ENCODE measurements at regions of chr6 and their contacts with region 1.

Region 1: GRCh38 chr6:111478749-111479148 is 4.3 kb downstream of the REV3L start:
- DNase-seq: peak; percentile 88
- H3K4me3 ChIP-seq: no peak overlapping the region
- H3K27ac ChIP-seq: peak overlapping the region; percentile 29
- H3K4me1 ChIP-seq: peaks cover 45% of the 10 kb centered on the region
- H3K27me3 ChIP-seq: no peaks in the 10 kb centered on the region
- CTCF ChIP-seq: peak; percentile 65

Region 2: DNA sequence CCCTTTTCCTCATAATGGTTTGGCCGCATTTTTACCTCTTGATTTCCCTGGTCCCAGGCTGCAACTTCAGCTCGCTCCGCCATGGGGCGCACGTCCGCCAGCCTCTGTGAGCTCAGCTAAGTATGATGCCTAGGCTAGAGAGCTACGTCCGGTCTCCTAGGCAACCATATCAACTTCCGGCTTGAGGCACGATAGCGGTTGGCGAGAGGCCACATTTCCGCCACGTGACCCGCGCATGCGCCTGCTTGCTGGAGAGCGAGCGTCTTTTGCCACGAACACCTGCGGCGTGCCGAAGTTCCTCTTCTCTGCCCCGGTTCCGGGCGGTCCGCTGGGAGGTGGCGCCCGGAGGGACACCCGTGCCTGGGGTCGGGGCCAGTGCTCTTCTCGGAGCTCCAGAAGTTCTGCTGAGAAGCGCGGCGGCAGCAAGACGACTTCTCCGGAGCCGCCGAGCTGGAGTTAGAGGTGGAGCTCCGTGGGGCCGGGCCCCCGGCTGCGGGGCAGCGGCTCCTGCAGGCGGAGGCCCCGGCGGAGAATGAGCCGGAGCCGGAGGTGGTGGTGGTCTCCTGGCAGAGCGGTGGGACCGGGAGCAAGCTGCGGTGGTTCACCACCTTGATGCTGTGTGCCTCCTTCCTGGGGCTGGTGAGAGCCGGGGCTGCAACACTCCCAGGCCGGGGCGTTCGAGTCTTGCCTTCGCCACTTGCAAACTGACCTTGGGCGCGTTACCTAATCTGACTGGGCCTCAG is 219.5 kb before region 1 on chr6:
- CTCF ChIA-PET with region 1: interaction called, 12 read pairs
- POLR2A ChIA-PET with region 1: no interaction called
- intact Hi-C with region 1: loop called (anchors 5 kb)
- DNase-seq: peak; percentile 99
- H3K4me3 ChIP-seq: peak overlapping the region; percentile 84
- H3K27ac ChIP-seq: peak overlapping the region; percentile 75
- H3K4me1 ChIP-seq: no peaks in the 10 kb centered on the region
- H3K27me3 ChIP-seq: no peaks in the 10 kb centered on the region
- CTCF ChIP-seq: peak; percentile 97

Region 3: GRCh38 chr6:111361648-111362047 is 117.1 kb before region 1 on chr6:
- CTCF ChIA-PET with region 1: interaction called, 13 read pairs
- POLR2A ChIA-PET with region 1: no interaction called
- intact Hi-C with region 1: loop called (anchors 5 kb)
- DNase-seq: peak; percentile 67
- H3K4me3 ChIP-seq: no peak overlapping the region
- H3K27ac ChIP-seq: no peak overlapping the region
- H3K4me1 ChIP-seq: no peaks in the 10 kb centered on the region
- H3K27me3 ChIP-seq: no peaks in the 10 kb centered on the region
- CTCF ChIP-seq: peak; percentile 61

Measured in A673 (cell line).